ENCODE measurements at regions of chr6 and their contacts with region 1.

Region 1: GRCh38 chr6:70369332-70369950 is 43.9 kb upstream of the FAM135A start:
- DNase-seq: peak; percentile 46 to 74
- ATAC-seq: peak; percentile 83

Region 2: DNA sequence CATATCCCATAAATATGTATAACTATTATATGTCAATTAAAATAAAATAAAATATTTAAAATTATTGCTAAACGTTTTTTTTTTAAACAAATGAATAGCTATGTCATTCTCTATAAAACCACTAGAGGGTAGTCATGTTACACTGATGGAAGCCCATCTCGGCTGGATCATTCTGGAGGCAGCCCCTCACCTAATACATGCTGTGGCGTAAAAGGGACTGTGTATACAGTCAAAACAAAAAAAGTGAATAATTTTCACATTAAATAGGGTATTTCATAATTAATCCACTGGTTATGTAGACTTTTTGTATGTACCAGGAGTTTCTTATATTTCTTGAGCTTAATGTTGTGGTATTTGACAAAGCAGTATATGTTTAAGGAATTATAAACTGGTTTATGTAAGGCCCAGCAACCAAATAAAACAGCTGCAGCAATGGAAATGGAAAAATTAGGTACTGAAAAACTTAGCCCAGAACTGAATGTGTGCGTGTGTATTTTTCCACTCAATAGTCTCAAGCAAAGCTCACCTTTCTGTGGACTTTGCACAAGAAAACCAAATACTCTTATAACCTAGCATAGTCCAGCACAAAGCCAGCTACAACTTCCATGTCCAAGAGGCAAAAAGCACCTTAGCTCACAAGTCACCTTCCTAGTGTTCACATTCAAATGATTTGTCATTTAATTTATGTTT is 148.3 kb before region 1 on chr6:
- intact Hi-C with region 1: loop called in 1 of 2 experiments (anchors 5 kb)
- DNase-seq: peak in 1 of 2 donors; percentile 16
- ATAC-seq: peak; percentile 72

Region 3: DNA sequence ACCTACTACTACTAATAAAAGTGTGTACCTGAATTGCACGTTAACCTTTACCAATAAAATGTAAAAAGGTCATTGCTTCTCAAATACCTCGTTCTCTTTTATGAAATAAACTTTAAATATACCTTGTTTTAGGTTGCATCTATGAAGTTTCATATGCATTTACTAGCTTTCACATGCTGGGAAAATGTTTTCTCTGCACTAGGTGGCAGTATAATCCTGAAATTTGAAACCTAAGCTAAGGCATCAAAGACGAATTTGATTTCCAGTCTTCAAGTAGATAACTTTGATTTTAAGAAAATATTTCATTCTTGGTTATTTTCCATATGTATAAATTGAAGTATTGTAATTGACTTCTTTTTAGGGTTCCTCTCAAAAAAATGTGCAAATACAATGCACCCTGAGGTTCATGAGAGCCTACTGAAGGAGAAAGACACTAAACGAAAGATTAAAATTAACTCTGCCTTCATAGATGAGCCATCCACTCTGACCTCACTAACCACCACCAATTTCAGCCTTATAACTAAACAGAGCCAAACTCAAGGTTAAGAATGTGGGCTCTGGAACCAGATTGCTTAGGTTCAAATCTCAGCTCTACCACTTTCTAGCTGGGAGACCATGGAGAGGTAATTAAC is 59.3 kb before region 1 on chr6:
- intact Hi-C with region 1: loop called in 1 of 2 experiments (anchors 5 kb)
- DNase-seq: no peak
- ATAC-seq: peak; percentile 58

Region 4: GRCh38 chr6:71012866-71013469 is 643.5 kb after region 1 on chr6:
- intact Hi-C with region 1: loop called in 1 of 2 experiments (anchors 10 kb)
- DNase-seq: no peak
- ATAC-seq: peak; percentile 72

Measured in left colon (tissue), 2 donors.